ENCODE measurements at regions of chr4 and their contacts with region 1.

Region 1: DNA sequence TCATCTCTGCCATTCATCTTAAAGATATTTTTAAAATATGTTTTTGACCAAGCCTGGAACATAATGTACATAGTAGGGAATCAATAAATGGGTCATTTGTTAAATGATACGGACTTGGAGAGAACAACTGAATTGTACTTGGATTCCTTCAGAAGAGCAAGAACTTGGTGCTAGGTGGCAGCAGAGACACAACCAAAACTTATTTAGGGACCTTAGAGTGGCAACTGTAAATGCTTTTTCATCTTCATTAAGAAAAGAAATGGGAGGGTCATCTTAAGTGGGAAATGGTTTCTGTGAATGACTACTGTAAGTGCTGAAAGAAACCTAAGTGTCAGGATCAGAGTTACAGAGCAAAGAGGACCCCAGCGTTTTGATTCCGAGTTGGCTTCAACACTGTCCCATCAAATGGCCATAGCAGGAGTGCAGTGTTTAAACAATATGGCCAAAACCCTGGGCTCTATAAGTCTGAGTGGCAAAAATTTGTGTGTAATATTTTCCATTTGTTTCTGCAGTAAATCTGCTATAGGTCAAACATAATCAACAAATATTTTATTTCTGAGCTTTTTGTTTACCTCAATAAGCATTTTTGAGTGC is 213.6 kb downstream of the PALLD start:
- DNase-seq: peak in 1 of 2 donors; percentile 13
- ATAC-seq: peak in 2 of 3 donors; percentile 22 to 42
- H3K4me3 ChIP-seq: no peak overlapping the region
- H3K4me3 Mint-ChIP-seq: peak overlapping the region; percentile 35
- H3K27ac ChIP-seq: peak overlapping the region; percentile 43
- H3K27ac Mint-ChIP-seq: peak overlapping the region; percentile 71 to 92
- H3K4me1 ChIP-seq: peaks cover 12% of the 10 kb centered on the region
- H3K4me1 Mint-ChIP-seq: peaks cover 22 to 28% of the 10 kb centered on the region in 2 donors
- H3K27me3 ChIP-seq: no peaks in the 10 kb centered on the region
- H3K27me3 Mint-ChIP-seq: no peaks in the 10 kb centered on the region
- CTCF ChIP-seq: peak; percentile 40

Region 2: GRCh38 chr4:168588916-168589531 is 121.4 kb before region 1 on chr4:
- intact Hi-C with region 1: no loop called
- DNase-seq: no peak
- ATAC-seq: no peak
- H3K4me3 ChIP-seq: no peak overlapping the region
- H3K4me3 Mint-ChIP-seq: no peak overlapping the region
- H3K27ac ChIP-seq: no peak overlapping the region
- H3K27ac Mint-ChIP-seq: no peak overlapping the region
- H3K4me1 ChIP-seq: no peaks in the 10 kb centered on the region
- H3K4me1 Mint-ChIP-seq: no peaks in the 10 kb centered on the region
- H3K27me3 ChIP-seq: no peaks in the 10 kb centered on the region
- H3K27me3 Mint-ChIP-seq: peaks cover 5 to 17% of the 10 kb centered on the region in 2 donors
- CTCF ChIP-seq: no peak

Region 3: GRCh38 chr4:168815379-168816345 is 105.2 kb after region 1 on chr4:
- intact Hi-C with region 1: loop called (anchors 10 kb)
- DNase-seq: no peak
- ATAC-seq: no peak
- H3K4me3 ChIP-seq: no peak overlapping the region
- H3K4me3 Mint-ChIP-seq: no peak overlapping the region
- H3K27ac ChIP-seq: no peak overlapping the region
- H3K27ac Mint-ChIP-seq: no peak overlapping the region
- H3K4me1 ChIP-seq: no peaks in the 10 kb centered on the region
- H3K4me1 Mint-ChIP-seq: peaks cover 15 to 16% of the 10 kb centered on the region in 2 donors
- H3K27me3 ChIP-seq: peaks cover 9% of the 10 kb centered on the region
- H3K27me3 Mint-ChIP-seq: peaks cover 12 to 43% of the 10 kb centered on the region in 2 donors
- CTCF ChIP-seq: no peak

Region 4: DNA sequence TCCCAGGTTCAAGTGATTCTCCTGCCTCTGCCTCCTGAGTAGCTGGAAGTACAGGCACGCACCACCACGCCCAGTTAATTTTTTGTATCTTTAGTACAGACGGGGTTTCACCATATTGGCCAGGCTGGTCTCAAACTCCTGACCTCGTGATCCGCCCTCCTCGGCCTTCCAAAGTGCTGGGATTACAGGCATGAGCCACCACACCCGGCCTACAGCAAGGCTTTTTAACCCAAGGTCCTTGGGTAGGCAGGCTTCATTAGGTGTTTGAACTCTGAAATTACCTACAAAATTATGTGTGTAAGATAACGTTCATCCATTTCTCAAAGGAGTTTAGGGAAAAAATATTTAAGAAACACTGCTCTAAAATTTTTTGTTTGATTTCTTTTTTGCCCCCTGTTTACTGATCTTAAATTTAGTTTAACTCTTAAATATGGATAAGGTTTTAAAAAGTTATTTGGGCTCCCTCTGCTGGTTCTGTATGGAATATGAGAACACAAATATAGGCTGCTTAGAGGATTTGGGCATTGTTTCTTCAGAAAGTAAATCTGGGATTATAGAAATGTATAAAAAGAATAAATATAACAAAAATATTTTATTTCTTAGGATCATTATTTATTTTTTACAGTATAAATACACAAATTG is 206.8 kb after region 1 on chr4:
- intact Hi-C with region 1: loop called (anchors 2 kb)
- DNase-seq: peak in 1 of 2 donors; percentile 46
- ATAC-seq: peak in 2 of 3 donors; percentile 45 to 52
- H3K4me3 ChIP-seq: no peak overlapping the region
- H3K4me3 Mint-ChIP-seq: no peak overlapping the region
- H3K27ac ChIP-seq: no peak overlapping the region
- H3K27ac Mint-ChIP-seq: no peak overlapping the region
- H3K4me1 ChIP-seq: no peaks in the 10 kb centered on the region
- H3K4me1 Mint-ChIP-seq: no peaks in the 10 kb centered on the region
- H3K27me3 ChIP-seq: no peaks in the 10 kb centered on the region
- H3K27me3 Mint-ChIP-seq: no peaks in the 10 kb centered on the region
- CTCF ChIP-seq: peak; percentile 58

Measured in natural killer cell (primary cell).